Ascending aorta (tissue), 2 donors: ENCODE measurements at regions of chr10 and their contacts with region 1.

Region 1: GRCh38 chr10:48656241-48656913 is 28.3 kb upstream of the WDFY4 start:
- DNase-seq: peak in 1 of 2 donors; percentile 96
- H3K4me3 ChIP-seq: peak overlapping the region; percentile 52 to 72
- H3K27ac ChIP-seq: peak overlapping the region; percentile 77 to 79
- H3K4me1 ChIP-seq: peaks cover 3 to 4% of the 10 kb centered on the region in 2 donors
- H3K27me3 ChIP-seq: no peaks in the 10 kb centered on the region
- CTCF ChIP-seq: peak; percentile 78 to 100 (median 89)

Region 2: GRCh38 chr10:47165711-47166524 is 1490.5 kb before region 1 on chr10:
- intact Hi-C with region 1: loop called (anchors 5 kb)
- DNase-seq: peak; percentile 51 to 90
- H3K4me3 ChIP-seq: peak overlapping the region; percentile 29 to 49
- H3K27ac ChIP-seq: peak overlapping the region; percentile 90 to 93
- H3K4me1 ChIP-seq: peaks cover 4 to 25% of the 10 kb centered on the region in 2 donors
- H3K27me3 ChIP-seq: no peaks in the 10 kb centered on the region
- CTCF ChIP-seq: no peak

Region 3: DNA sequence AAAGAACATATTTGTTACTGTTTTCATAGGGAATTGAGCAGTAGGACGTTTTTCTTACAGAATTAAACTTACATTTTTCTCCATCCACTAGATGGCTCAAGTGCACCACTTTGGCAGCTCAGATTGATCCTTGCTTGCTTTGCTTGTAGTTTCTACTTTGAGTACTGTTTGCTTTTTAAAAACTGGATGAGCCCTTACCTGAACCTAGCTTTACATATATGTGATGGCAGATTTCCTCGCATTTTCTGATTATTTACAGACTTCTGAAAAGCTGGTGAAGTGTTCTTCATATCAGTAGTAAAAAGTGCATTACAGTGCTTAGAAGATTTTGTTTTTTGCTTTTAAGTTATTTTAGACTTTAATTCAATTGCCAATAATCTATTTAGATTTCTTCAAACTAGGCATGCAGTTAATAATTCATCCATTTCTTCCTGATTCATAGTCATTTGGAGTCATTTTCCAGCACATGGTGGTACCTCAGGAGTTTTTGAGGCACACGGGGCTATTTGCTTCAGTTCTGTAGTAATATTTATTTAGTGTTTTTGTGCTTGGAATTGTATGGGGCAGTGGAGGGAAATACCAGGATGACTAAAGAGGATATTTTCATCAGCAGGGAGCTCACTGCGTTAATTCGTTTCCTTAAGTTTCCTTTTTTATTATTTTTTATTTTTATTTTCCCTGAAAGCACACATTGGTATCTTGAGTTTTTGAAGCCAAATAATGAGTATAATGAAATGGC is 292.6 kb before region 1 on chr10:
- intact Hi-C with region 1: loop called (anchors 1 kb)
- DNase-seq: no peak
- H3K4me3 ChIP-seq: no peak overlapping the region
- H3K27ac ChIP-seq: no peak overlapping the region
- H3K4me1 ChIP-seq: peaks cover 0 to 2% of the 10 kb centered on the region in 2 donors
- H3K27me3 ChIP-seq: no peaks in the 10 kb centered on the region
- CTCF ChIP-seq: peak; percentile 46 to 75 (median 56)

Region 4: GRCh38 chr10:48551861-48552591 is 104.4 kb before region 1 on chr10:
- intact Hi-C with region 1: loop called (anchors 1 kb)
- DNase-seq: peak in 1 of 2 donors; percentile 70
- H3K4me3 ChIP-seq: no peak overlapping the region
- H3K27ac ChIP-seq: no peak overlapping the region
- H3K4me1 ChIP-seq: peaks cover 0 to 3% of the 10 kb centered on the region in 2 donors
- H3K27me3 ChIP-seq: no peaks in the 10 kb centered on the region
- CTCF ChIP-seq: peak; percentile 57 to 72 (median 65)

Region 5: DNA sequence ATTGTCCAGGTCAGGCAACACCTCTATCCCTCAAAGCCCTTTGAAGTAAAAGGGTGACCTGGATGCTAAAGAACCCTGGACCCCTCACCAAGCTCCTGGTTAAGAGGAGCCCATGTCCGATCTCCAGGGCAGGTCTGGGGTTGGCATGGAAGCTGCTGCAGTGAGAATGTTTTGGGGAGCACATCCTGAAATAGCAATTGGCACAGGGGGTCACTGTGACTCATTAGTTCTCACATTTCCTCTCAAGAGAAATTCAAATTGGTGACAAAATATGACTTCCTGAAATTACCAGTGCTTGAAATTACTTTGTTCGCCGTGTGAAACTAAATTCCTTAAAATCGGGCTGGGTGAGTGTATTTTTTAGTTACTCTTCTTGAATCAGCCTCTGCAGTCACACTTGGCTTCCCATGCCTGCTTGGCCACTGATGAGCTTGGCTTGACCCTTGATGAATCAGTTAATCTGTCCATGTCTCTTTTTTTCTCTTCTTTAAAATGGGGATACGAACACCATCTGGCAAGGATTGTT is 32.7 kb before region 1 on chr10:
- intact Hi-C with region 1: no loop called
- DNase-seq: peak in 1 of 2 donors; percentile 59
- H3K4me3 ChIP-seq: no peak overlapping the region
- H3K27ac ChIP-seq: peak overlapping the region in 1 of 2 donors; percentile 31
- H3K4me1 ChIP-seq: no peaks in the 10 kb centered on the region
- H3K27me3 ChIP-seq: no peaks in the 10 kb centered on the region
- CTCF ChIP-seq: no peak

Region 6: DNA sequence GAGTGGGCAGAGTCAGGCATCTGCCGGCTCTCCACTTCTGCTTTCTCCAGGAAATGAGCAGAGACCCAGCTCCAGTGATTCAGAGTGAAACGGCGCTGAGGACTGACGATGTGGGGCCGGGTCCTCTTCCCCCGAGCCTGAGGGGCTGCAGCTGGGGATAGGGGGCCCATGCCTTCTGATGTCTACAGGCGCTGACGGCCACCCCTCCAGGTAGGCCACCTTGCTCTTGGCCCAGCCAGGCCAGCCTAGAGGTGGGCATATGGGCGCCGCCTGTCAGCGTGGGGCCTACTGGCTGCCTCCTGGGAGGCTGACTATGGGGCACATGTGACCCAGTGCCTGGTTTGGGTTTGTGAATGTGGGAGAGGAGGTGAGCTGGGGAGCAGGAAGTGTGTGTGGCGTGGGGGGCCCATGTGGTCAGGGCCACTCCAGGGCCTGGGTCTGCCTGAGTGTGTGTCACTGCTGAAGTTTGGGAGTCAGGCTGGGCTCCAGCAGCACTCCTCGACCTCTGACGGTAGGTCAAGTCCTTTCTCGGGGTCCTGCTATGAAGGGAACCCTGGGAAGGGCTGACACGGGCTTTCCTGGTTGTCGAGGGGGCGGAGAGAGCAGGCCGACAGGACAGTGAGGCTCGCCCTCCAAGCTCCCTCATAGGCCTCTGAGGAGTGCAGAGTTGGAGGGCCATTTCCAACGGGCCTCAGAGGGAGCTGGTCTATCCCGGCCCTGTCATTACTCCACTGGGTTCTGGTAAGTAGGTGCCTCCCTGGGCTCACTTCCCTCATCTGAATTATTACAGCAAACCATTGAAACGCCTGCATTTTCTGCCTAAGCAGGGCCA is 28.6 kb after region 1 on chr10 and contains the start of gene WDFY4:
- intact Hi-C with region 1: no loop called
- DNase-seq: no peak
- H3K4me3 ChIP-seq: peak within 1 kb of the TSS in 1 of 2 donors; percentile 4
- H3K27ac ChIP-seq: peak within 1 kb of the TSS in 1 of 2 donors; percentile 19
- H3K4me1 ChIP-seq: no peaks in the 10 kb centered on the region
- H3K27me3 ChIP-seq: no peaks in the 10 kb centered on the region
- CTCF ChIP-seq: no peak
- total RNA-seq, gene WDFY4: 33.8 TPM

Region 7: GRCh38 chr10:49164559-49165188 is 508.3 kb after region 1 on chr10:
- intact Hi-C with region 1: loop called (anchors 5 kb)
- DNase-seq: no peak
- H3K4me3 ChIP-seq: no peak overlapping the region
- H3K27ac ChIP-seq: no peak overlapping the region
- H3K4me1 ChIP-seq: no peaks in the 10 kb centered on the region
- H3K27me3 ChIP-seq: no peaks in the 10 kb centered on the region
- CTCF ChIP-seq: peak; percentile 47 to 67 (median 59)